Gastrocnemius medialis (tissue), 4 donors: ENCODE measurements at regions of chr5 and their contacts with region 1.

Region 1: GRCh38 chr5:103475629-103476240 is 86.9 kb downstream of the NUDT12 start:
- DNase-seq: no peak
- ATAC-seq: peak; percentile 35 to 48
- H3K4me3 ChIP-seq: no peak overlapping the region
- H3K27ac ChIP-seq: no peak overlapping the region
- H3K4me1 ChIP-seq: peaks cover 21 to 36% of the 10 kb centered on the region in 2 donors
- H3K27me3 ChIP-seq: no peaks in the 10 kb centered on the region
- CTCF ChIP-seq: peak; percentile 42 to 79 (median 67)
- POLR2A ChIP-seq: no peak

Region 2: GRCh38 chr5:102998224-102998623 is 477.5 kb before region 1 on chr5:
- in situ Hi-C with region 1: no loop called
- intact Hi-C with region 1: no loop called
- DNase-seq: no peak
- ATAC-seq: no peak
- H3K4me3 ChIP-seq: no peak overlapping the region
- H3K27ac ChIP-seq: no peak overlapping the region
- H3K4me1 ChIP-seq: no peaks in the 10 kb centered on the region
- H3K27me3 ChIP-seq: no peaks in the 10 kb centered on the region
- CTCF ChIP-seq: no peak
- POLR2A ChIP-seq: no peak

Region 3: DNA sequence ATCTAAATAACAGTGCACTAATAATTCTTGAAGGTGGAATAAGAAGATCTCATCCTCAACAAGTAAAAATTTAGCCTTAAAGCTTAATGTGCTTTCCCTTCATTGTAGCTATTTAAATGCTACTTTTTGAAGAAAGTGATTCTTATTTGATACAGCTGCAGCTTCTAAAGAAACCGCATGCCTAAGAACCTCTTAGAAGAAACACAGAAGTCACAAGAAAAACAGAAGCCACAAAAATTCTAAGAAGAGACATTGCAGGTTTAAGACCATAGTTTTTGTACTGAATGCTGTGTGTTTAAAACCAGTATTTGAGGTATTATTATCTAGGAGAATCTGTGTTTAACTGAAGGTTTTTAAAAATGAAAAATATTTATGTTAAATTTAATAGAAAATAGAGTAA is 287.3 kb before region 1 on chr5:
- in situ Hi-C with region 1: no loop called
- intact Hi-C with region 1: no loop called
- DNase-seq: no peak
- ATAC-seq: no peak
- H3K4me3 ChIP-seq: no peak overlapping the region
- H3K27ac ChIP-seq: no peak overlapping the region
- H3K4me1 ChIP-seq: no peaks in the 10 kb centered on the region
- H3K27me3 ChIP-seq: no peaks in the 10 kb centered on the region
- CTCF ChIP-seq: no peak
- POLR2A ChIP-seq: no peak

Region 4: DNA sequence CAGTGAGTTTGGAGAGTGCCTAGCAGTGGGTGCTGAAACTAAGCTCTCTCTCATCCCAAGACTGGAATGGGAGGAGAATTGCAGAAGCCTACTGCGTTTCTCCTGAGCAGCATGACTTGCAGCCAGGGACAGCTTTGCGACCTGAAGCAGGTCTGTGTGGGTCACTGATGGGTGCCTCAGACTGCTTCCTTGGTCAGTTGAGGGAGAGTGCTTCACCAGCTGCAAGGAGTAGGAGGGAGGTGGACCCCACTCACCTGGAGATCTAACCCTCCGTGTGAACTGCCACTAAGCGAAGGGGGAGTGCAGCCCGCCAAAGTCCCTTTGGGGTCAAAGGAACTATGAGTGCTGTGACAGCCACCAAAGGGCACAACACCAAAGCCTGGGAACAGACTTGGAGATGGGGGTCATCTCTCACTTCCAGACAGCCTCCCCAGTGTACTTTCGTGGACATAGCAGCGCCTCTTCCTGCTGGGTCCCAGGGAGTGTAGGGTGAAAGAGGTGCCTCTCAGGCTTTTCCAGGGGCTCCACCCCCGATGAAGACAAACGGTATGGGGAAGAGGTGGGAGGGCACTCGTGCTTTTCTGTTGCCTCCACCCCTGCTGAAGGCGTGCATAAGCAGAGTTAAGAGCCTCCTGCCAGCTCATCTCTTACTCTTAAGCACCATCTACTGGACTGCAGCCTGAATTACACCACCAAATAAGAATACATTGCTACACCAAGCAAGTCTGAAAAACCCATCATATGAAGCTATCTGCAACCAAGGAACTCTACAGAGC is 251.4 kb before region 1 on chr5:
- in situ Hi-C with region 1: loop called in 2 of 4 experiments (anchors 10 kb)
- intact Hi-C with region 1: no loop called
- DNase-seq: no peak
- ATAC-seq: peak in 1 of 2 donors; percentile 85
- H3K4me3 ChIP-seq: no peak overlapping the region
- H3K27ac ChIP-seq: no peak overlapping the region
- H3K4me1 ChIP-seq: no peaks in the 10 kb centered on the region
- H3K27me3 ChIP-seq: no peaks in the 10 kb centered on the region
- CTCF ChIP-seq: peak; percentile 11 to 53 (median 46)
- POLR2A ChIP-seq: no peak

Region 5: GRCh38 chr5:103232393-103232999 is 243.2 kb before region 1 on chr5:
- in situ Hi-C with region 1: loop called (anchors 5 to 10 kb)
- intact Hi-C with region 1: loop called (anchors 2 kb)
- DNase-seq: no peak
- ATAC-seq: peak in 1 of 2 donors; percentile 55
- H3K4me3 ChIP-seq: no peak overlapping the region
- H3K27ac ChIP-seq: no peak overlapping the region
- H3K4me1 ChIP-seq: no peaks in the 10 kb centered on the region
- H3K27me3 ChIP-seq: no peaks in the 10 kb centered on the region
- CTCF ChIP-seq: peak; percentile 49 to 84 (median 70)
- POLR2A ChIP-seq: no peak

Region 6: GRCh38 chr5:103364074-103364473 is 111.7 kb before region 1 on chr5:
- in situ Hi-C with region 1: no loop called
- intact Hi-C with region 1: no loop called
- DNase-seq: no peak
- ATAC-seq: no peak
- H3K4me3 ChIP-seq: no peak overlapping the region
- H3K27ac ChIP-seq: no peak overlapping the region
- H3K4me1 ChIP-seq: no peaks in the 10 kb centered on the region
- H3K27me3 ChIP-seq: no peaks in the 10 kb centered on the region
- CTCF ChIP-seq: no peak
- POLR2A ChIP-seq: no peak